ENCODE measurements at regions of chr12 and their contacts with region 1.

Region 1: DNA sequence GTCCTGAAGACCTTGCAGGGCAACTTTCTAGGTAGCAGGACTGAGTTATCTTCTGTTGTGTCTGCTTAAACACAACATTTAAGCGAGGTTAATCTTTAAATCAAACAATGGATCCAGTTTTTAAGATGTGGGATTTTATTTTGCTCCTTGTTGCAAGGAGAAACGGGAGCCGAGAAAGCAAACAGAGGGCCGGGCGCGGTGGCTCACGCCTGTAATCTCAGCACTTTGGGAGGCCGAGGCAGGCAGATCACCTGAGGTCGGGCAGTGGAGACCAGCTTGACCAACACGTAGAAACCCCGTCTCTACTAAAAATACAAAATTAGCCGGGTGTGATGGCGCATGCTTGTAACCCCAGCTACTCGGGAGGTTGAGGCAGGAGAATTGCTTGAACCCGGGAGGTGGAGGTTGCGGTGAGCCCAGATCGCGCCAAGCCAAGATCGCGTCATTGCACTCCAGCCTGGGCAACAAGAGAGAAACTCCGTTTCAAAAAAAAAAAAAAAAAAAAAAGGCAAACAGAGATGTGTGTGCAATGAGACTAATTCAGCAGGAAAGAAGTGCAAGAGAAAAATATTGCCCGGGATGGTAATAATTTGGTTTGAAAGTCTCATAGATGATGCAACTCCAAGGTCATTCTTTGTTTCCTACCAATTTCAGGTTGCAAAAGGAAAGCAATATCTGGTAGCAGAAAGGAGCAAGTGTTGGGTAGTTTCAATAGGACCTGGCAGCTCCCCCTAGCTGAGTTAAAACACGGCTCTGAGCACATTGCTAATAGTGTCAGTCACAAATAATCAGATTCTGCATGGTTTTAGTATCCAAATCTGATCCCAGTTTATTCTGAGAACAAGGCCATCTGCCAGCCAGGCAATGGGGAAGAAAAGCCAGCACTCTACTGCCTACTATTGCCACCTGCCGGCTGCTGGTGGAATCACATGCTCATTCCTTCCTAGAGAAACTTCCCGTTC is 141.4 kb downstream of the PPM1H start:
- DNase-seq: peak; percentile 77 to 91 (median 87)
- H3K4me3 ChIP-seq: no peak overlapping the region
- H3K27ac ChIP-seq: peak overlapping the region in 1 of 2 donors; percentile 1
- H3K4me1 ChIP-seq: peaks cover 3% of the 10 kb centered on the region
- H3K27me3 ChIP-seq: no peaks in the 10 kb centered on the region
- CTCF ChIP-seq: peak; percentile 90 to 92 (median 91)
- EP300 ChIP-seq: no peak
- POLR2A ChIP-seq: no peak

Region 2: GRCh38 chr12:61369241-61369910 is 1424.2 kb before region 1 on chr12:
- intact Hi-C with region 1: no loop called
- DNase-seq: no peak
- H3K4me3 ChIP-seq: no peak overlapping the region
- H3K27ac ChIP-seq: no peak overlapping the region
- H3K4me1 ChIP-seq: no peaks in the 10 kb centered on the region
- H3K27me3 ChIP-seq: peaks cover 5% of the 10 kb centered on the region
- CTCF ChIP-seq: no peak
- EP300 ChIP-seq: no peak
- POLR2A ChIP-seq: no peak

Region 3: GRCh38 chr12:62581288-62582064 is 212.1 kb before region 1 on chr12:
- intact Hi-C with region 1: loop called in 2 of 4 experiments (anchors 5 kb)
- DNase-seq: no peak
- H3K4me3 ChIP-seq: no peak overlapping the region
- H3K27ac ChIP-seq: no peak overlapping the region
- H3K4me1 ChIP-seq: no peaks in the 10 kb centered on the region
- H3K27me3 ChIP-seq: no peaks in the 10 kb centered on the region
- CTCF ChIP-seq: peak; percentile 31 to 71 (median 53)
- EP300 ChIP-seq: no peak
- POLR2A ChIP-seq: no peak